CD8-positive, alpha-beta memory T cell (primary cell): ENCODE measurements at regions of chr16 and their contacts with region 1.

Region 1: GRCh38 chr16:89909777-89910716 is 8.6 kb upstream of the MC1R start:
- DNase-seq: peak; percentile 53 to 75 (median 61)
- H3K4me3 ChIP-seq: no peak overlapping the region
- H3K4me3 Mint-ChIP-seq: peak overlapping the region in 1 of 7 donors; percentile 28
- H3K27ac ChIP-seq: no peak overlapping the region
- H3K27ac Mint-ChIP-seq: no peak overlapping the region
- H3K4me1 ChIP-seq: peaks cover 6% of the 10 kb centered on the region
- H3K4me1 Mint-ChIP-seq: peaks cover 0 to 21% (median 8%) of the 10 kb centered on the region in 3 donors
- H3K27me3 ChIP-seq: no peaks in the 10 kb centered on the region
- H3K27me3 Mint-ChIP-seq: no peaks in the 10 kb centered on the region

Region 2: DNA sequence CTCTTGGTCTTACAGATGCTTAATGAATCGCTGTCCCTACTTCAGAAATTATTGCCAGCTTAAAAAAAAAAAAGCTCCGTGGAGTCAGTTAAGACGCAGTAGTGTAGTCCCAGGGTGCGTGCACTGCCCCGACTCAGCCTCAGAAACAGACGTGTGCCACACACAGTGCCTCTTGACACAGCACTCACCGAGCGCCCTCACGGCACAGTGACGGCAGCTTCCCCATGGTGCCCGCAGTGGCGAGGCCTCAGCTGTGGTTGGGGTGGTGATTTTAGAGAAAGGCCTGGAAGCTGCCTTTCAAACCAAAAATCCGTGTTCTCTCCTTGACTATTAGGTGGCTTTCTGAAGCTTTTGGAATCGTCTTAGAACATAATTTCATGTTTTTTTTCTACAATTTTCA is 22.8 kb before region 1 on chr16:
- CTCF ChIA-PET with region 1: interaction called, 12 read pairs
- POLR2A ChIA-PET with region 1: no interaction called
- DNase-seq: no peak
- H3K4me3 ChIP-seq: no peak overlapping the region
- H3K4me3 Mint-ChIP-seq: peak overlapping the region in 1 of 7 donors; percentile 66
- H3K27ac ChIP-seq: no peak overlapping the region
- H3K27ac Mint-ChIP-seq: peak overlapping the region in 1 of 8 donors; percentile 14
- H3K4me1 ChIP-seq: no peaks in the 10 kb centered on the region
- H3K4me1 Mint-ChIP-seq: peaks cover 10 to 21% (median 15%) of the 10 kb centered on the region in 3 donors
- H3K27me3 ChIP-seq: no peaks in the 10 kb centered on the region
- H3K27me3 Mint-ChIP-seq: peaks cover 0 to 2% of the 10 kb centered on the region in 2 donors

Region 3: GRCh38 chr16:89922884-89923690 is 13.0 kb after region 1 on chr16 and contains the start of gene TUBB3:
- CTCF ChIA-PET with region 1: interaction called, 31 read pairs
- POLR2A ChIA-PET with region 1: interaction called, 3 read pairs
- DNase-seq: peak in 1 of 5 donors; percentile 35
- H3K4me3 ChIP-seq: no peak within 1 kb of the TSS
- H3K4me3 Mint-ChIP-seq: peak within 1 kb of the TSS; percentile 44 to 85 (median 62)
- H3K27ac ChIP-seq: peak within 1 kb of the TSS; percentile 57
- H3K27ac Mint-ChIP-seq: peak within 1 kb of the TSS in 2 of 8 donors; percentile 14 to 50
- H3K4me1 ChIP-seq: peaks cover 49% of the 10 kb centered on the region
- H3K4me1 Mint-ChIP-seq: peaks cover 23 to 58% (median 29%) of the 10 kb centered on the region in 3 donors
- H3K27me3 ChIP-seq: peaks cover 33% of the 10 kb centered on the region
- H3K27me3 Mint-ChIP-seq: peaks cover 36 to 40% of the 10 kb centered on the region in 2 donors
- total RNA-seq, gene TUBB3: 0.31 to 0.38 TPM

Region 4: DNA sequence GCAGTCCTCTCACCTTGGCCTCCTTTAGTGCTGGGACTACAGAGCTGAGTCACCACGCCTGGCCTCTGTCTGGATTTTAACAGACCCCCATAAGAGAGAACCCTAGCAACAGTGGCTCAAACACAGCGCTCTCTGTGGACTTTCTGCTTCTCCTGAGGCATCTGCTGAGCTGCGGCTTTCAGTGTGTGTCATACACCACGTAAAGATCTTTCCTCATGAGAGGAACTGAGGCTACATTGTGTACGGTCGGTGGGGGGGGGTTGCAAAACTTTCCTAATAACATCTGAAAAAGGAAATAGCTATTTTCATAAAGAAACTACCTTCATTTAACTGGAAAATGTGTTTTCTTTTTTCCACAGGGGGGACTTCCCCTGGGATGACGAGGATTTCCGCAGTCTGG is 71.4 kb after region 1 on chr16:
- CTCF ChIA-PET with region 1: no interaction called
- POLR2A ChIA-PET with region 1: no interaction called
- DNase-seq: no peak
- H3K4me3 ChIP-seq: no peak overlapping the region
- H3K4me3 Mint-ChIP-seq: no peak overlapping the region
- H3K27ac ChIP-seq: no peak overlapping the region
- H3K27ac Mint-ChIP-seq: no peak overlapping the region
- H3K4me1 ChIP-seq: no peaks in the 10 kb centered on the region
- H3K4me1 Mint-ChIP-seq: peaks cover 0 to 9% (median 0%) of the 10 kb centered on the region in 3 donors
- H3K27me3 ChIP-seq: no peaks in the 10 kb centered on the region
- H3K27me3 Mint-ChIP-seq: no peaks in the 10 kb centered on the region